Heart left ventricle (tissue), 16 donors: ENCODE measurements at regions of chr7 and their contacts with region 1.

Region 1: DNA sequence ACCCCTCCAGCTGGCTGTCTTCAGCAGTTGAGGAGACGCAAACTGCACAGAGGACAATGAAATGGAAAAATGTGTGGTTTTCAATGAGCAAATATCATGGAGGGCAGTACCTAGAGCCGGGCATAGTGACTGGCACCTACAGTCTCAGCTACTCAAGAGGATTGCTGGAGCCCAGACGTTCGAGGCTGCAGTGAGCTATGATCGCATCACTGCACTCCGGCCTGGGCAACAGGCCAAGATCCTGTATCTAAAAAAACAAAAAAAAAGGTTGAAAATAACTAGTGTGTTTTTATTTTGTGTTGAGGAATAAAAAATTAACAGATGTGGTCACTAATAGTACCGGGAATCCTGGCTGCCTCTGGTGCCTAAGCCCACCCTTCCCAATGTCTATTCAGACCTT is 345.5 kb downstream of the GALNT17 start:
- DNase-seq: no peak
- ATAC-seq: no peak
- H3K4me3 ChIP-seq: no peak overlapping the region
- H3K27ac ChIP-seq: no peak overlapping the region
- H3K4me1 ChIP-seq: peaks cover 0 to 4% (median 0%) of the 10 kb centered on the region in 12 donors
- H3K27me3 ChIP-seq: no peaks in the 10 kb centered on the region
- CTCF ChIP-seq: no peak
- POLR2A ChIP-seq: no peak

Region 2: DNA sequence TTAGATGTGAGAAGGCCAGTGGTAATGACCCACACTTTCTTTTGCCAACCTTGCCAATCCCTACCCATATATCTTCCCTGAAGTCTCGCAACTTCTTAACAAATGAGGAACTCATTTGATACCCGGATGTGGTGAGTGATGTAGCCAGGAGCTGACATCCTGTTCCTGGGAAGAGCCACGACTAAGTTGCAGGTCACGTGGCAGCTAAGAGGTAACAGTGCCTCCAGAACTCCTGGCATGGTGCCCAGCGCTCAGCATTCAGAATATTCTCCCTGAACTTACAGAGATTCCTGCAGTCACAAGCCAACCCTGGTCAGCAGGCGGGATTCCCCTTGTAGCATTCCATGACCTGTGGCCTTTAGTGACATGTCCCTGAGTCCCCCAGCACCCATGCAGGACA is 63.0 kb before region 1 on chr7:
- intact Hi-C with region 1: loop called in 1 of 10 experiments (anchors 10 kb)
- DNase-seq: peak; percentile 66 to 88 (median 77)
- ATAC-seq: peak; percentile 53 to 84 (median 76)
- H3K4me3 ChIP-seq: no peak overlapping the region
- H3K27ac ChIP-seq: peak overlapping the region in 4 of 12 donors; percentile 12 to 63 (median 23)
- H3K4me1 ChIP-seq: peaks cover 0 to 11% (median 3%) of the 10 kb centered on the region in 12 donors
- H3K27me3 ChIP-seq: no peaks in the 10 kb centered on the region
- CTCF ChIP-seq: no peak
- POLR2A ChIP-seq: no peak

Region 3: DNA sequence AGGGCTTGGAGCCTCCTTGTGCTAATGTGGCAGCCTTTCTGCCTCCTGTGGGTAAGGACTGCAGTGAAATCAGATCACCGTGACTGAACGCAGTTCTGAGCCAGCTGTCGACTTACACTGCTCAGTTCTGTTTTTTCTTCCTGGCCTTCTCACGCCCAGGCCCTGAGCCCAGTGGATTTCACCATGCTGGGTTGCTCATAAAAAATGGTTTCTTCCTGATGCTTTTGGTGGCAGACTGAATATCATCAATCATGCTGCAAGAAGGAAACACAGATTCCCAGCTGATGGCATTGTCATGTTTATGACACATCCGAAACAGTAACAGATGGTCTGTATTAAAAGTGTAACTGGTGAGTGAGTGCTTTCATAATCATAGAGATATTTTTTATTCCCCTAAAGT is 44.1 kb after region 1 on chr7:
- intact Hi-C with region 1: no loop called
- DNase-seq: no peak
- ATAC-seq: no peak
- H3K4me3 ChIP-seq: no peak overlapping the region
- H3K27ac ChIP-seq: no peak overlapping the region
- H3K4me1 ChIP-seq: no peaks in the 10 kb centered on the region
- H3K27me3 ChIP-seq: no peaks in the 10 kb centered on the region
- CTCF ChIP-seq: no peak
- POLR2A ChIP-seq: no peak

Region 4: GRCh38 chr7:71558806-71559613 is 81.6 kb after region 1 on chr7:
- intact Hi-C with region 1: loop called in 1 of 10 experiments (anchors 10 kb)
- DNase-seq: no peak
- ATAC-seq: no peak
- H3K4me3 ChIP-seq: no peak overlapping the region
- H3K27ac ChIP-seq: no peak overlapping the region
- H3K4me1 ChIP-seq: no peaks in the 10 kb centered on the region
- H3K27me3 ChIP-seq: no peaks in the 10 kb centered on the region
- CTCF ChIP-seq: no peak
- POLR2A ChIP-seq: no peak